CD4-positive, alpha-beta T cell (primary cell): ENCODE measurements at regions of chr16 and their contacts with region 1.

Region 1: GRCh38 chr16:28524681-28525171 is 14.0 kb downstream of the NUPR1 start:
- DNase-seq: peak in 2 of 14 experiments; percentile 17 to 38
- ATAC-seq: peak; percentile 78
- H3K4me3 ChIP-seq: no peak overlapping the region
- H3K4me3 Mint-ChIP-seq: no peak overlapping the region
- H3K27ac ChIP-seq: no peak overlapping the region
- H3K27ac Mint-ChIP-seq: no peak overlapping the region
- H3K4me1 ChIP-seq: peaks cover 4% of the 10 kb centered on the region
- H3K4me1 Mint-ChIP-seq: peaks cover 11% of the 10 kb centered on the region
- H3K27me3 ChIP-seq: no peaks in the 10 kb centered on the region
- H3K27me3 Mint-ChIP-seq: no peaks in the 10 kb centered on the region
- CTCF ChIP-seq: no peak

Region 2: GRCh38 chr16:28473714-28474265 is 50.9 kb before region 1 on chr16:
- CTCF ChIA-PET with region 1: no interaction called
- POLR2A ChIA-PET with region 1: no interaction called
- intact Hi-C with region 1: loop called in 1 of 2 experiments (anchors 10 kb)
- DNase-seq: no peak
- ATAC-seq: no peak
- H3K4me3 ChIP-seq: no peak overlapping the region
- H3K4me3 Mint-ChIP-seq: no peak overlapping the region
- H3K27ac ChIP-seq: no peak overlapping the region
- H3K27ac Mint-ChIP-seq: peak overlapping the region; percentile 12
- H3K4me1 ChIP-seq: no peaks in the 10 kb centered on the region
- H3K4me1 Mint-ChIP-seq: peaks cover 4% of the 10 kb centered on the region
- H3K27me3 ChIP-seq: no peaks in the 10 kb centered on the region
- H3K27me3 Mint-ChIP-seq: no peaks in the 10 kb centered on the region
- CTCF ChIP-seq: no peak

Region 3: DNA sequence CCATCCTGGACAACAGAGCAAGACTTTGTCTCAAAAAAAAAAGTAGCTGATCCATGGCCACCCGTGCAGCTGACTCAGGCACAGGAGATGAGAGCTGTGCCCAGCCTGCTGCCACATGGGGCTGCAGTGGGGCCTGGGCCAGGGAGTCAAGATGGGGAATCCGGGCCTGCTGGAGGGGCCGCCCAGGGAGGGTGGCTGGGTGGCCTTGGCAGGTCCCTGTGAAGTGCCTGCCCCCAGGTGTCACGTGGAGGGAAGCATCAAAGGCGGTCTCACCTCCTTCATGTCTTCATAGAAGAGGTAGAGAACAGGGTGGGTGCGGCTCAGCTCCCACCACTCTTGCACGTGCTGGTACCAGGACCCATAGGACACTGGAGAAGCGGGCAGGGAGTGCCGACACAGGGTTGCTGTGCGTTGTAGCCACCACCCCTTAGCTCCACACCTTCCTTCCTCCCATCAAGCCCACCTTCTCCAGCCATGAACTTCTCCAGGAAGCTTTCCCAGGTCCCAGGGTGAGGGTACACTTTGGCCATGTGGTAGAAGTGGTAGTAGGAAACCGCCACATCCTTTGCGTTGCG is 68.3 kb after region 1 on chr16:
- CTCF ChIA-PET with region 1: no interaction called
- POLR2A ChIA-PET with region 1: no interaction called
- intact Hi-C with region 1: loop called in 1 of 2 experiments (anchors 5 kb)
- DNase-seq: no peak
- ATAC-seq: no peak
- H3K4me3 ChIP-seq: no peak overlapping the region
- H3K4me3 Mint-ChIP-seq: no peak overlapping the region
- H3K27ac ChIP-seq: no peak overlapping the region
- H3K27ac Mint-ChIP-seq: peak overlapping the region; percentile 45
- H3K4me1 ChIP-seq: peaks cover 1% of the 10 kb centered on the region
- H3K4me1 Mint-ChIP-seq: peaks cover 8% of the 10 kb centered on the region
- H3K27me3 ChIP-seq: no peaks in the 10 kb centered on the region
- H3K27me3 Mint-ChIP-seq: no peaks in the 10 kb centered on the region
- CTCF ChIP-seq: no peak